ENCODE measurements at regions of chr17 and their contacts with region 1.

Region 1: GRCh38 chr17:19338031-19338990 is 24.2 kb downstream of the B9D1 start:
- DNase-seq: no peak
- ATAC-seq: peak; percentile 98
- H3K4me3 ChIP-seq: no peak overlapping the region
- H3K27ac ChIP-seq: no peak overlapping the region
- H3K4me1 ChIP-seq: no peaks in the 10 kb centered on the region; the same call in 1 of the 2 replicates
- H3K27me3 ChIP-seq: no peaks in the 10 kb centered on the region; a peak in 1 of 4 replicates
- CTCF ChIP-seq: peak; percentile 68 to 74 (median 73)
- EP300 ChIP-seq: no peak
- POLR2A ChIP-seq: no peak
- RAD21 ChIP-seq: peak; percentile 62

Region 2: DNA sequence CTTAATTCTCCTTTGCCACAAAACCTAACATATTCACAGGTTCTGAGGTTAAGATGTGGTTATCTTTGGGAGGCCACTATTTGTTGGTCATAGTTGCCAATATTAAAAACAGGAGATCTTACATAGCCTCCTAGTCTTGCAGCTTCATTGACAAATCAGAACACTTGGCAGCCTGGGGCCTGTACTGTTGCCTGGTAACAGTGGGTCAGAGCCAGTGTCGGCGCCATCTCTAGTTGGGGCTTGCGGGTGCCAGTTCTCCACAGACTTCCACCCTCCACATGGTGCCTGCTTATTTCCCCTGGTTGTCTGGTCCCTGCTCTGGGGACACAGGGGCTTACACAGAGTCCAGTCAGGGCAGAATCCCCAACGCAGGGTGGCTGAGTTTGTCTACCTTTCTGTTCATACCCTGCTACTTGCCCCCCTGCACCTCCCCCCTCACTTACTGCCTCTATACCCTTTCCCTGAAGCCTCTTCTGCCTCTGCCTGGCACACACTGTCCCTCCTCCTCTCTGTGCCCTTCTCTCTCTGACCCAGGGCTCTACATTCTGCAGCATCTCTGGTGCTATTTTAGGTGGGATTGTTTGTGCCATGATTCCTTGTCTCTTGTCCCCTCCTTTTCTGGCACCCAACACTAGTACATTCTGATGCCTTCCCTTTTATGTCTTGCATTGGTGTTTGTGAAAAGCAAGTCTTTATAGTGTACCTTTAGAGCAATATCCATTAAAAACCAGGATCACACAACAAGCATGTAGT is 87.7 kb before region 1 on chr17:
- CTCF ChIA-PET with region 1: interaction called, 4 read pairs
- POLR2A ChIA-PET with region 1: no interaction called
- RAD21 ChIA-PET with region 1: no interaction called
- SMC1A ChIA-PET with region 1: no interaction called
- in situ Hi-C with region 1: loop called (anchors 5 kb)
- intact Hi-C with region 1: no loop called
- DNase-seq: no peak
- ATAC-seq: no peak
- H3K4me3 ChIP-seq: no peak overlapping the region
- H3K27ac ChIP-seq: no peak overlapping the region
- H3K4me1 ChIP-seq: no peaks in the 10 kb centered on the region
- H3K27me3 ChIP-seq: no peaks in the 10 kb centered on the region; a peak in 2 of 4 replicates
- CTCF ChIP-seq: no peak
- EP300 ChIP-seq: no peak
- POLR2A ChIP-seq: no peak
- RAD21 ChIP-seq: no peak

Region 3: DNA sequence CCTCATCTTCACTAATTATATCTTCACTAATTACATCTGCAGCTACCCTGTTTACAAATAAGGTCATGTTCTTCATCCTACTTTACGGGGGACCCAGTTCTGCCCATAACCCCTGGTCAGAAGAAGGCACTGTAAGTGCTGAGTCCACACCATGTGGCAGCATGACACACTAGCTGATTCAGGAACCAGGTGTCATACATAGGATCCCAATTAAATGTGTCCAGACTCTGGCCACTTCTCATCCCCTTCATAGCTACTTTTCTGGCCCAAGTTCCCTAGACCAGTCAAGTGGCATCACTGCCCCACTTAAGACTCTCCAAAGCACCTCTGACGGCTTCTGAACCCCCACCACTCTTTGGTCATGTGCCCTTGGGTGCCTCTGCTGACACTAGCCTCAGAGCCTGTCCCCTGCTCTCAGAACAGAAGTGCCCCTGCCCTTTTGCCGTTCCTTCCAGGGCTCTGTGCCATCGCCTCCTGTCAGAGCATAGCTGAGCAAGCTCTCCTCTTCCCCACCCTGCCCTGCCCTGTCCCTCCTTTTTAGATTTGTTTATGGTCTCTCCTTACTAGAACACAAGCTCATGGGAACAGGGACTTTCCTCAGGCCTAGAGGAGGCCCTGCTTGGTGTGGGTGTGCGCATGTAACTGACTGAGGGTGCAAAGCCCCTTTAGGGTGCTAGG is 36.9 kb before region 1 on chr17:
- CTCF ChIA-PET with region 1: no interaction called
- POLR2A ChIA-PET with region 1: no interaction called
- RAD21 ChIA-PET with region 1: interaction called, 4 read pairs
- SMC1A ChIA-PET with region 1: interaction called, 11 read pairs
- in situ Hi-C with region 1: no loop called
- intact Hi-C with region 1: no loop called
- DNase-seq: no peak
- ATAC-seq: no peak
- H3K4me3 ChIP-seq: no peak overlapping the region
- H3K27ac ChIP-seq: no peak overlapping the region
- H3K4me1 ChIP-seq: peaks cover 34% of the 10 kb centered on the region
- H3K27me3 ChIP-seq: no peaks in the 10 kb centered on the region
- CTCF ChIP-seq: no peak
- EP300 ChIP-seq: no peak
- POLR2A ChIP-seq: no peak
- RAD21 ChIP-seq: no peak

Region 4: GRCh38 chr17:19321481-19322128 is 16.7 kb before region 1 on chr17:
- CTCF ChIA-PET with region 1: interaction called, 20 read pairs
- POLR2A ChIA-PET with region 1: no interaction called
- RAD21 ChIA-PET with region 1: no interaction called
- SMC1A ChIA-PET with region 1: interaction called, 4 read pairs
- in situ Hi-C with region 1: no loop called
- intact Hi-C with region 1: no loop called
- DNase-seq: no peak
- ATAC-seq: no peak
- H3K4me3 ChIP-seq: no peak overlapping the region
- H3K27ac ChIP-seq: no peak overlapping the region
- H3K4me1 ChIP-seq: no peaks in the 10 kb centered on the region
- H3K27me3 ChIP-seq: no peaks in the 10 kb centered on the region
- CTCF ChIP-seq: 0 out of 6 replicates have a peak, but pooled peaks of 1 of the 3 experiments have one; percentile 10
- EP300 ChIP-seq: no peak
- POLR2A ChIP-seq: no peak
- RAD21 ChIP-seq: no peak

Region 5: GRCh38 chr17:19377602-19378392 is 39.5 kb after region 1 on chr17:
- CTCF ChIA-PET with region 1: no interaction called
- POLR2A ChIA-PET with region 1: no interaction called
- RAD21 ChIA-PET with region 1: no interaction called
- SMC1A ChIA-PET with region 1: no interaction called
- in situ Hi-C with region 1: no loop called
- intact Hi-C with region 1: no loop called
- DNase-seq: peak; percentile 96
- ATAC-seq: peak; percentile 98
- H3K4me3 ChIP-seq: peak overlapping the region; percentile 84
- H3K27ac ChIP-seq: peak overlapping the region; percentile 93
- H3K4me1 ChIP-seq: no peaks in the 10 kb centered on the region
- H3K27me3 ChIP-seq: no peaks in the 10 kb centered on the region
- CTCF ChIP-seq: no peak
- EP300 ChIP-seq: peak in 1 of 2 experiments; percentile 20; a peak in 1 of 4 replicates
- POLR2A ChIP-seq: peak; percentile 88
- RAD21 ChIP-seq: no peak

Measured in GM12878 (cell line).